Mammary epithelial cell (primary cell): ENCODE measurements at regions of chr6 and their contacts with region 1.

Region 1: DNA sequence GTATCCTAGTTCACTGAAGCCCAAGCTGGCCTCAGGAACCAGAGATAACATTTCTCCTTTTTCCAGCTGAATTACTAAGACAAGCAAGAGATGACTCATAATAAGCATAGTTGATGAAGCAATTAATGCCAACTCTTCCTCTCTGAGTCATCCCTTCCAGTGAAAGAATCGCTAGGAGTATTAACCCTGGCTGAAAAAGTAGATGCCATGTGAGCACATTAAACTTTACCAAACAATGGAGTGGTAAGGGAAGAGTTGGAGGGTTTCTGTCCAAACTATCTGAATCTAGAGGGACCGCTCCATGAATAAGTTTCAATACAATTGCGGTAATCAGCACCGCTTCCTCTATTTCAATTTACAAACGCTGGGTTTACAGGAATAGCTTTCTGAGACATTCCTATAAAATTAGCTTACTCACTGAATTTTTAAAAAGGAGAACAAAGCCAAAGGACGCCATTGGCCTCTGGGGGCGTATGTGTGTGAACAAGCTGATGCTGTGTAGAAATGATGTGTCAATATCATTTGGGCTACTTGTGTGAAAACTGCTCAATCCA is 48.3 kb downstream of the ATXN1 start:
- DNase-seq: peak; percentile 92
- H3K4me3 ChIP-seq: peak overlapping the region; percentile 21 to 41 (median 30)
- H3K27ac ChIP-seq: peak overlapping the region; percentile 97
- H3K4me1 ChIP-seq: peaks cover 30% of the 10 kb centered on the region
- H3K27me3 ChIP-seq: no peaks in the 10 kb centered on the region
- CTCF ChIP-seq: peak; percentile 37 to 48

Region 2: DNA sequence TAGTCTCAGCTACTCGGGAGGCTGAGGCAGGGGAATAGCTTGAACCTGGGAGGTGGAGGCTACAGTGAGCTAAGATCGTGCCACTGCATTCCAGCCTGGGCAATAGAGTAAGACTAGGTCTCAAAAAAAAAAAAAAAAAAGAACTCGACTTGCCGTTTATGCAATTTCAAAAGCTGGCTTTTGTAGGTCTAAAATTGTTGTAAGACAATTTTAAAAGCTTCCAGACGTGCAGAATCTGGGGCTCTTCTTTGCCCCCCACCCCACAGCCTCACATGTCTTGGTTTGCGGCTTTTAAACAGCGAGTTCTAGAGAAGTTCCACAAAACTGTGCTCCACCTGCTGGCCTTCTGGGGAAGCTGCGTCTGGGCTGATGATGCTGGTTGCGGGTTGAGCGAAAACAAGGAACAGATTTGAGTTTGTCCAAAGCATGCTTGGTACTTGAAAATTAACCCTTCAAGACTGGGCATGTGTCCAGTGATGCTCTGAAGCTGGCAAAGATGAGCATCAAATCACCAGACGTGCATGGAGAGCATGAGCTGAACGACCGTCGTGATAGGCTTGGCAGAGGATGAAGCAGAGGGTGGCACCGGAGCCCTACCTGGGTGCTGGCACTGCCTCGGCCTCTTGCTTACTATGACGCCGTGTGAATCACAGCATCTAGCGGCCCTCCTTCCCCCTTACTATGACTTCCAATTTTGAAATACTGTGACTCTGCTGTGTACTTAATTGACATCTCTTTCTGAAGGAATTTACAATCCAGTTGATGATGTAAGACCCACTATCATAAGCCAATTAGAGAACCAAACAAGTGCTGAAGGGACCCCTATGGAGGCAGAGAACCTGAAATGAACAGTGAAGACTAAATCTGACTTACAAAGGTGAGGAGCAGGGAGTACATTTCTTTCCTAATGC is 303.2 kb before region 1 on chr6:
- CTCF ChIA-PET with region 1: no interaction called
- dilution Hi-C with region 1: no loop called
- in situ Hi-C with region 1: no loop called
- intact Hi-C with region 1: loop called (anchors 5 kb)
- DNase-seq: peak; percentile 62
- H3K4me3 ChIP-seq: no peak overlapping the region
- H3K27ac ChIP-seq: no peak overlapping the region
- H3K4me1 ChIP-seq: no peaks in the 10 kb centered on the region
- H3K27me3 ChIP-seq: no peaks in the 10 kb centered on the region
- CTCF ChIP-seq: peak; percentile 67

Region 3: DNA sequence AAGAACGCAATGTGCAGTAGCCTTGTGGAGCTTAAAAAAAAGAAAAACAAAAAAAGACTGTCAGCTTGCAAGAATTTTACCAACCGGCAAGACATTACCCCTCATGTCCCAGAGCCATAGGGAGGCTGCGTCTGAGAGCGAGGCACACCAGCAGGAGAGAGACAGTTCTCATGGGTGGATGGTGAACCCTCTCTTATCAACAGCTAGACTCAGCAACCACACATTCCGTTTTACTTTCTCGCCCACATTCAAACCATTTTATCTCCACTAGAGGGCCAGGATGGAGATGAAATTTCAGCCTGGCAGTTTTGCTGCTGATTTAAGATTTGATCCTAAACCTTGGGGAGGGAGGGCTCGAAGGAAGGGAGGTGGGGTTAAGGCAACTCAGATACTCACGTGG is 198.8 kb before region 1 on chr6:
- CTCF ChIA-PET with region 1: interaction called, 14 read pairs
- dilution Hi-C with region 1: no loop called
- in situ Hi-C with region 1: no loop called
- intact Hi-C with region 1: loop called (anchors 1 kb)
- DNase-seq: peak; percentile 18
- H3K4me3 ChIP-seq: no peak overlapping the region
- H3K27ac ChIP-seq: no peak overlapping the region
- H3K4me1 ChIP-seq: peaks cover 7% of the 10 kb centered on the region
- H3K27me3 ChIP-seq: no peaks in the 10 kb centered on the region
- CTCF ChIP-seq: peak; percentile 44 to 58

Region 4: DNA sequence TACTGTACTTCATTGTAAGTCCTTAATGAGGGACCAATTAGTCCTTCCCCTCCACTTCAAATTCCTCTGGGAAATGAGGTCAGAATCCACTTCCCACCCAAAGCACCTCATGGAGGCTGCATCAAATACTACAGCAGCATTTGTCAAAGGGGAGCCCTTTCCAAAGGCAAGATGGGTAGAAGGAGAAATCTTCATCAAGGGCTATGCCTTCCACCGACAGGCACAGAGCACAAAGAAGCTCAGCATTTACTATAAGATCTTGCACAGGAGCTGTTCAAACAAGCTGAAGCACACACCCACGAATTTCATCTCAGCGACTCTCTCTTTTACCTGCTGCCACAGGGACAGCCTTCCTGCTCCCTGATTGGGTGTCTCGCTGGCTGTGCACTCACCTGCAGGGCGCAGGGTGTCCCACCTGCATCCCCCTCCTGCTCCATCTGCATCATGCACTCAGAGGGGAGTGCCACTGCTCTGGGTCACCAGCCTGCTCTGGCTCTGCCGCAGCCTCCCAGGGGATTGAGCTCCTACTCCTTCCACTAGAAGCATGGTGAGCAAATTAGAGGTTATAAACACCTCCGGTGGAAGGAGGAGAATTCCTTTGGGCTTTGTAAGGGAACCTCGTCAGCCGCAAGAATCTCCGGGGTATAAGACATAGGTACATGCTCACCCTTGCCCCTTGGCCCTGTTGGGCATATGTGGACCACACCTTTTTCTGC is 116.2 kb before region 1 on chr6:
- CTCF ChIA-PET with region 1: no interaction called
- dilution Hi-C with region 1: no loop called
- in situ Hi-C with region 1: no loop called
- intact Hi-C with region 1: loop called (anchors 5 kb)
- DNase-seq: peak; percentile 82
- H3K4me3 ChIP-seq: peak overlapping the region in 2 of 3 experiments; percentile 12 to 41
- H3K27ac ChIP-seq: peak overlapping the region; percentile 59
- H3K4me1 ChIP-seq: peaks cover 38% of the 10 kb centered on the region
- H3K27me3 ChIP-seq: no peaks in the 10 kb centered on the region
- CTCF ChIP-seq: no peak

Region 5: DNA sequence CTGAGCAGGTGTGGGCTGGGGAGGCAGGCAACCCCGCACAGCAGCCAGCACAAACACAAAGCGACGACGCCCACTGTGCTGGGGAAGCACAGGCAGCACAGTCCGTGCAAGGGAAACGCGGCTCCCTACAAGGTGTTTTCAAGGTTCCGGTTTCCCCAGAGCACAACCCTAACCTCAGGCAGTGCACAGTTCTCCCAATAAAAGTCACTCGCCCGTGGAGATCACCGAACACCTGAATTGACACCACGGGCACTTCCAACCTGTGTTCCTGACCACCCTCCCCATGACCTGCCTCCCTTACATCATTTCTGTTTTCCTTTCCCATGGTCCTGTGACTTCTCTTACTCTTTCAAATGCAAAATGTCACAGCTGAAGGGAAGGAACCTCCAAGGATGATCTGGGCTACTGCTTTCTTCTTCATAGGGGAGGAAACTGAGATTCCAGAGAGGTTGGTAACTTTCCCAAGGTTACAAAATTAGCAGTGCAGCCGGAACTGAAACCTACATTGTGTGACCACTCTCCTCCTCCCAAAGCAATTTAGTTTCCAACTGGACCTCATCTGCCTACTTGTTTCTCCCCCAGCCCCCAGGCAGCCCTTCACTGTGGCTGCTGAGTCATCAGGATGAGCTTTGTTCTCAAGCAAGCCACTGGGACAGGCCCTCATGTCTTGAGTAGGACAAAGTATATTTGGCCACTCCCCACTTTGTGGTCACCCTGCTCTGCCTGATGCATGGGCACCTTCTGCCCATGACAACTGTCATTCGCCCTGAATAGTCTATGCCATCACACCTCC is 77.0 kb before region 1 on chr6:
- CTCF ChIA-PET with region 1: interaction called, 4 read pairs
- dilution Hi-C with region 1: no loop called
- in situ Hi-C with region 1: no loop called
- intact Hi-C with region 1: loop called (anchors 5 kb)
- DNase-seq: peak; percentile 80
- H3K4me3 ChIP-seq: no peak overlapping the region
- H3K27ac ChIP-seq: no peak overlapping the region
- H3K4me1 ChIP-seq: peaks cover 29% of the 10 kb centered on the region
- H3K27me3 ChIP-seq: no peaks in the 10 kb centered on the region
- CTCF ChIP-seq: no peak

Region 6: GRCh38 chr6:16723826-16724225 is 10.8 kb after region 1 on chr6:
- CTCF ChIA-PET with region 1: no interaction called
- dilution Hi-C with region 1: no loop called
- in situ Hi-C with region 1: no loop called
- intact Hi-C with region 1: loop called (anchors 1 kb)
- DNase-seq: peak; percentile 92
- H3K4me3 ChIP-seq: no peak overlapping the region
- H3K27ac ChIP-seq: peak overlapping the region; percentile 85
- H3K4me1 ChIP-seq: peaks cover 61% of the 10 kb centered on the region
- H3K27me3 ChIP-seq: no peaks in the 10 kb centered on the region
- CTCF ChIP-seq: no peak

Region 7: GRCh38 chr6:16741112-16742016 is 28.4 kb after region 1 on chr6:
- CTCF ChIA-PET with region 1: no interaction called
- dilution Hi-C with region 1: no loop called
- in situ Hi-C with region 1: no loop called
- intact Hi-C with region 1: loop called (anchors 1 kb)
- DNase-seq: peak; percentile 94
- H3K4me3 ChIP-seq: no peak overlapping the region
- H3K27ac ChIP-seq: peak overlapping the region; percentile 55
- H3K4me1 ChIP-seq: peaks cover 53% of the 10 kb centered on the region
- H3K27me3 ChIP-seq: no peaks in the 10 kb centered on the region
- CTCF ChIP-seq: no peak